Activated B cell treated with CpG ODN at 0.5 μM for 24 hours (primary cell): ENCODE measurements at regions of chr3 and their contacts with region 1.

Region 1: DNA sequence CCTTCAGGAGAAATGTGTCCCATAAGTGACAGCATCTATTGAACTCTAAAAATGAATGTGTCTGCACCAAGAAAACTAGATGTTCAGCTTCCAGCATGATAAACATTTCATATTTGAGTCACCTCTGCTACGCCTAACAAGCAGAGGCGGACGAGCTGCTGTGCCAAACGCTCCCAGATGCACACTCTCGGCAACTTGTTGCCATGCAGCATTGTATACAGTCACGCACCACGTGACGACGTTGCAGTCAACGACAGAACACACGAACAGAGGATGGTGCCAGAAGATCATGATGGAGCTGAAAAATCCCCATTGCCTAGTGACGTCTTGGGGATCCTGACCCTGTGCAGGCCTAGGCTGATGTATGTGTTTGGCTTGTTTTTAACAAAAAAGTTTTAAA is 137.5 kb downstream of the XXYLT1 start:
- DNase-seq: no peak
- ATAC-seq: peak; percentile 8
- H3K4me3 Mint-ChIP-seq: no peak overlapping the region
- H3K27ac Mint-ChIP-seq: no peak overlapping the region
- H3K4me1 Mint-ChIP-seq: peaks cover 39% of the 10 kb centered on the region
- H3K27me3 Mint-ChIP-seq: no peaks in the 10 kb centered on the region
- CTCF ChIP-seq: no peak

Region 2: DNA sequence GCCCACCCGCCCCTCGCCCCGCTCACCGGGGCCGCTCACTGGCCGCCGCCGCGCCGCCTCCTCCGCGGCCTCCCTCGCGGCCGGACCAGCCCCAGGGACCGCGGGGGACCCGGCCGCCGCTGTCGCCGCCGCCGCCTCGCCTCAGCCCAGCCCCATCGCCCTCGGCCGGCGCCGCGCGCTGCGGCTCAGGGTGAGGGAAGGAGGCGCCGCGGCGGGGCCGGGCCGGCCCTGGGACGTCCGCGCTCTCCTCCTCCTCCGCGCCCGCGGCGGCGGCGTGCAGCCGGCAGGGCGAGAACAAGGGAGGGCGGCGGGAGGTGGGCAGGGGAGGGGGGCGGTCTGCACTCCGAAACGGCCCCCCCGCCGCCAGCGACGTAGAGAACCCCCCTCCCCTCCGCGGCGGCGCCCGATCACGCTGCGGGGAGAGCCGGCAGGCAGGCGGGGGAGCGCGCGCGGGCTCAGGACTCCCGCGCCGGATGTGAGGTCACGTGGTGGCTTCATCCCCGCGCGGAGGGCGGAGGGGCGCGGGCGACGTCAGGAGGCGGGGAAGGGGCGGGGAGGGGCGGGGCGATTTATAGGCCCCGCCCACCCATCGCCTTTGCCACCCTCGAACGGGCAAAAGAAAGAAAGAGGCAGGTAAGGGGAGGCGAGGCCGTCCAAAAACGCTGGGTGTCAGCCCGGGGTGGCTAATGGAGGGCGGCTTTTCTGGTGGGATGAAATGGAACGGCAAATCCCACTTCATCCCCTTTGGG is 646.7 kb before region 1 on chr3 and contains the start of gene ATP13A3:
- CTCF ChIA-PET with region 1: no interaction called
- POLR2A ChIA-PET with region 1: no interaction called
- intact Hi-C with region 1: loop called (anchors 1 kb)
- DNase-seq: peak; percentile 86
- ATAC-seq: peak; percentile 75
- H3K4me3 Mint-ChIP-seq: peak within 1 kb of the TSS; percentile 91
- H3K27ac Mint-ChIP-seq: peak within 1 kb of the TSS; percentile 88
- H3K4me1 Mint-ChIP-seq: peaks cover 63% of the 10 kb centered on the region
- H3K27me3 Mint-ChIP-seq: no peaks in the 10 kb centered on the region
- CTCF ChIP-seq: no peak
- total RNA-seq, gene ATP13A3: 79.8 and 91.9 TPM in 2 replicates

Region 3: GRCh38 chr3:194738254-194739093 is 395.0 kb before region 1 on chr3:
- CTCF ChIA-PET with region 1: no interaction called
- POLR2A ChIA-PET with region 1: no interaction called
- intact Hi-C with region 1: loop called (anchors 1 kb)
- DNase-seq: no peak
- ATAC-seq: no peak
- H3K4me3 Mint-ChIP-seq: no peak overlapping the region
- H3K27ac Mint-ChIP-seq: no peak overlapping the region
- H3K4me1 Mint-ChIP-seq: peaks cover 30% of the 10 kb centered on the region
- H3K27me3 Mint-ChIP-seq: no peaks in the 10 kb centered on the region
- CTCF ChIP-seq: no peak

Region 4: DNA sequence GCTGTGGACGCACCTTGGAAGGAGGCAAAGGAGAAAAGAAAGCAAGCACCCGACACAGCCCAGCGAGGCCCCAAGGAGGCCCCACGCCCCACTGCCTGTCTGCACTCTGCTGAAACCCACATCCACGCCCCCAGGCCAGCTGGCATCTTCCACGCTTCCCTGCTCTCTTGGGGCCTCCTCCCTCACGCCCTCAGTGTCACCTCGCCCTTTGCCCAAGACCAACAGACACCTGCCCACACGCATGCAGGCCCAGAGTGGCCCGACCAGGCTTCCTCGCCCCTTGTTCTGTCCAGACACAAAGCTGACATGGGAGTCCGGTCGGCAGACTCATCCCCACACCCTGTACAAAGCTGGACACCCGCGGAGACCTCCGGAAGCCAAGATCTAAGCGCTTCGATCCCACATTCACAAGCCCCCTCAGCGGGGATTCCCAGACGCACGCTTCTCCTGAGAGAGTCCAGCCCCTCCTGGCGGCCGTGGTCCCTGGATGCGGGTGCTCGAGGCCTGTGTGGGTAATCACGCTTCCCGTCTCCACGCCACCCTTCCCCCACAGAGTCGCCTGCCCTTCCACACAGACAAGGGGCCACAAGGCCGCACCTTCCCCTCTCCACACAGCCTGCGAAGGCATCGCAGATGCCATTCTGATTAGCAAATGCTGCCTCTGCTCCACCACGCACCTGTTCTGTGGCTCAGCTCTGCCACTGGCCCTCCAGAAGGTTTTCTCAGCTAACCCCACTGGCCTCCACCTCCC is 39.1 kb before region 1 on chr3:
- CTCF ChIA-PET with region 1: no interaction called
- POLR2A ChIA-PET with region 1: interaction called, 4 read pairs
- intact Hi-C with region 1: loop called (anchors 1 kb)
- DNase-seq: peak; percentile 61
- ATAC-seq: peak; percentile 86
- H3K4me3 Mint-ChIP-seq: peak overlapping the region; percentile 80
- H3K27ac Mint-ChIP-seq: peak overlapping the region; percentile 89
- H3K4me1 Mint-ChIP-seq: peaks cover 57% of the 10 kb centered on the region
- H3K27me3 Mint-ChIP-seq: no peaks in the 10 kb centered on the region
- CTCF ChIP-seq: no peak

Region 5: DNA sequence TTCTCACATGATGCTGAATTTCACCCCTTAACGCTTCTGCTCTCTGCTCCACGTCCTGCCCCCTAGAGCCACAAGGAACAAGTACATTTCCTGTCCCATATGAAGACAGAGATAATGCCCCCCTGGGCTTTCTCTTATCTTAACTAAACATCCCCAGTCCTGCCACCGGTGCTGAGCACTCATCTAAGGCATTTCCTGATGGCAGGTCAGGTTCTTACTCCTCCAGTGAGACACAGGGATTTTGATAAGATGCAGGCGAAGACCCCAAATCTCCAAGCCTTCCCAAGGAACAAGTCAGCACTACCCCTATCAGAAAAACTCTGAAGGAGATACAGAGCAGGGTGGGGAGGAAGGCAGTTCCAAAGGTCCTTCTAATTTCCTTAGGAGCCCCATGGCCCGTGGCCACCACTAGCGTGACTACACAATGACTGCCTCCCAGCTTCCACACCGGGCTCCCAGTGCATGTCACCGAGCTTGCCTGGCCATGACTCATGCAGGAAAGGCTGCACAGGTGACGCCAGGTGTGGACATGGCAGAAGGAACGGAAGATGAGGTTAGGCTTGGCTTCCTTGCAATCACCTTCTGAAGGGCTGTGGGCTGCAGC is 15.4 kb before region 1 on chr3:
- CTCF ChIA-PET with region 1: interaction called, 3 read pairs
- POLR2A ChIA-PET with region 1: interaction called, 5 read pairs
- intact Hi-C with region 1: loop called (anchors 1 kb)
- DNase-seq: no peak
- ATAC-seq: peak; percentile 70
- H3K4me3 Mint-ChIP-seq: no peak overlapping the region
- H3K27ac Mint-ChIP-seq: peak overlapping the region; percentile 12
- H3K4me1 Mint-ChIP-seq: peaks cover 11% of the 10 kb centered on the region
- H3K27me3 Mint-ChIP-seq: no peaks in the 10 kb centered on the region
- CTCF ChIP-seq: no peak

Region 6: DNA sequence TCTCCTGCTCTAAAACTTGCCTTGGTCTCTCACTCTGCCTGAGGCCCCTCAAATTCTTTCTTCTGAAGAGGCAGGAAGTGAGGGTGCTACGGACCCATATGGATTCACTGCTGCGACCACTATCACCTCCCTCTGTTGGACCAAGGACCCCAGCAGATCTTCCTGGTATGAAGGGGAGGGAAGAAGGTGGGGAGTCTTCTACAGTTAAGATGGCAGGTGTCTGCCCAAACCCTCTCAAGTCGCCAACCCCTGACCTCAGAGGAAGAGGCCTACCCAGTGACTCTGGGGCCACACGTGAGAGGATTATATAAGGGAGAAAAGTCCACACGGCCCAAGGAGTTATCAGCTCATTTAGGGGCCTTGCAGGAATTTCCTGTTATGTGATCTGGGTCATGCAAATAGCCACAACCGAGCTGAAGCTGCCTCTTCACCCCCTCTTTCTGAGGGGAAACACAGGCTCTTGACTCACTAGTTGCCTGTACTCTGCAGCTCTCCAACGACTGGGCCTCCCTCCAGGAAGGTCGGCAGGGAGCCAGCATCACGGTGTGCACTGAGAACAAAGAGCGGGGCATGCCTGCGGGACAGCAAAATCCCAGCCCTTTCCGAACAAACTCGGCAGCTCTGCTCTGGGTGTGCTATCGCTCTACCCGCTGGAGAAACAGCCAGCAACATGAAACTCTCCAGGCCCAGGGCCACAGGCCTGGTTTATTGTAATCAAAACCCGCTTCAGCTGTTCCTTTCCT is 21.5 kb after region 1 on chr3:
- CTCF ChIA-PET with region 1: interaction called, 10 read pairs
- POLR2A ChIA-PET with region 1: interaction called, 53 read pairs
- intact Hi-C with region 1: loop called (anchors 1 kb)
- DNase-seq: no peak
- ATAC-seq: peak; percentile 40
- H3K4me3 Mint-ChIP-seq: peak overlapping the region; percentile 53
- H3K27ac Mint-ChIP-seq: peak overlapping the region; percentile 90
- H3K4me1 Mint-ChIP-seq: peaks cover 90% of the 10 kb centered on the region
- H3K27me3 Mint-ChIP-seq: no peaks in the 10 kb centered on the region
- CTCF ChIP-seq: no peak

Region 7: DNA sequence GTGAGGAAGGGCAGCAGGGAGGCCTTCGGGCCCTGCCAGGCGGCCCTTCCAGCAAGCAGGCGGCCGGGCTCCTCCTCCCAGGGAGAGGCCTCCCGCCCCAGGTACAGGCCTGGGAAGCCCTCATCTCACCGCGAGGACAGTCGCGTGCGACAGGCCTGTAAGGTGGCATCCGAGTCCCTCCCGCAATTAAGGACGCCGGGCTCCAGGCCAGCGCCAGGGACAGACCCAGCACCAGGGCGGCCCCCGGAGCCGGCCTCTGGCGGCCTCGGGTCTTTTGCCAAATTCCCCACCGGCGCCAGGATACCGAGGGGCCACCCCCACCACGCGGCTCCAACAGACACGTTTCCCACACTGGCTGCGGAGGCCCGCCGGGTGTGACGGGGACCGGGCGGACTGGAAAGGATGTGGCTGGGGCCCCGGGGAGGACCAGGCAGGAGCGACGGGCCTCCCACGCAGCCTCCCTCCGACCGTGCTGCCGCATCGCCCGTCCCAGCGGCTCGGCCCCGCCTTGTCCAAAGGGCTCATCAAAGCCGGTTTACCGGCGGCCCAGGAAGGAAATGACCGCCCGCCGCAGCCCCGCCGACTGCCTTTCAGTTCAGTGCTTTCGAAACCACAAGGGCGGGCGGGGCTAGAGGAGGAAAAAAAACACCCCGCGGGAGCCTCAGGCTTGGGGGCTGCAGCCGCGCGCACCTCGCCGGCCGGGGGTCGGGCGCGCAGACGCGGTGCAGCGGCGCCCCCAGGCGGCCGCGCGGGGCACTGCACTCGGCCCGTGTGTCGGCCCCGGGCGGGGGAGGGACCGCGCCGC is 126.2 kb after region 1 on chr3:
- CTCF ChIA-PET with region 1: no interaction called
- POLR2A ChIA-PET with region 1: interaction called, 3 read pairs
- intact Hi-C with region 1: loop called (anchors 1 kb)
- DNase-seq: peak; percentile 95
- ATAC-seq: peak; percentile 91
- H3K4me3 Mint-ChIP-seq: peak overlapping the region; percentile 74
- H3K27ac Mint-ChIP-seq: peak overlapping the region; percentile 81
- H3K4me1 Mint-ChIP-seq: peaks cover 13% of the 10 kb centered on the region
- H3K27me3 Mint-ChIP-seq: no peaks in the 10 kb centered on the region
- CTCF ChIP-seq: no peak

Region 8: GRCh38 chr3:195876297-195877031 is 743.0 kb after region 1 on chr3:
- CTCF ChIA-PET with region 1: no interaction called
- POLR2A ChIA-PET with region 1: no interaction called
- intact Hi-C with region 1: no loop called
- DNase-seq: no peak
- ATAC-seq: no peak
- H3K4me3 Mint-ChIP-seq: no peak overlapping the region
- H3K27ac Mint-ChIP-seq: no peak overlapping the region
- H3K4me1 Mint-ChIP-seq: peaks cover 4% of the 10 kb centered on the region
- H3K27me3 Mint-ChIP-seq: no peaks in the 10 kb centered on the region
- CTCF ChIP-seq: no peak